ENCODE measurements at regions of chr7 and their contacts with region 1.

Region 1: DNA sequence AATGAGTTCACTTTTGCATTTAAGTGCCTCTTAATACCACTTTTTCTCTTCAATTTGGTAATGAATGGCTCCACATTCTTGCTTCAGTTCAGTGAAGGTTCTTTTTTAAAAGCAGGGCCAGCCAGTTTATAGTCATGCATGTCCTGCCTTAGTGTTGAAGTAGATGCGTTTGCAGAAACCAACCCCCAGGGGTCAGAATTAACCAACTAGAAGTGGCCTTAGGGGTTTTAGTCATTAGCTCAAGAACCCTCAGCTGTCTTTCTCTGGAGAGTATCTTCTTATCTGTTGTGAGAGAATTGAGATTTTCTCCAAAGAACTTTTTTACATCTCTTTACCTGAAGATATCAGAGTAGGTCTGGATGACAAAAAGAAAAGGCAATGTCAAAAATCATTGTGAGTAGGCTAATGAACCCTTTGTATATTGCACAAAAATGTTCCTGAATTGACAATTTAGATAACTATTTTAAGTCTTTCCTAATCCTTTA is 82.2 kb downstream of the PIK3CG start:
- DNase-seq: peak; percentile 88 to 96 (median 90)
- ATAC-seq: peak; percentile 95
- H3K4me3 ChIP-seq: no peak overlapping the region
- H3K27ac ChIP-seq: no peak overlapping the region
- H3K4me1 ChIP-seq: peaks cover 7 to 21% of the 10 kb centered on the region in 2 experiments
- H3K27me3 ChIP-seq: no peaks in the 10 kb centered on the region; a peak in 1 of 5 replicates
- CTCF ChIP-seq: peak; percentile 92 to 99 (median 94)
- EP300 ChIP-seq: peak; percentile 57; the same call in 1 of the 2 replicates
- POLR2A ChIP-seq: no peak
- RAD21 ChIP-seq: peak; percentile 100

Region 2: DNA sequence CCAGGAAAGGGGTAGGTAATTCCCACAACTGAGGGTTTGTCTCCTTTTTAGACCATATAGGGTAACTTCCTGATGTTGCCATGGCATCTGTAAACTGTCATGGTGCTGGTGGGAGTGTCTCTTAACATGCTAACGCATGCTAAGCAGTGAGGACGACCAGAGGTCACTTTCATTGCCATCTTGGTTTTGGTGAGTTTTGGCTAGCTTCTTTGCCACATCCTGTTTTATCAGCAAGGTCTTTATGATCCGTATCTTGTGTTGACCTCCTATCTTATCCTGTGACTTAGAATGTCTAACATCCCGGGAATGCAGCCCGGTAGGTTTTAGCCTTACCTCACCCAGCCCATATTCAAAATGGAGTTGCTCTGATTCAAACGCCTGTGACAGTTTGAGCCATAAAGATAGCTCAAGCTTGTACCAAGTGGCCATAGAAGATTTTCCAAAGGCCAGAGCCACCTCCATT is 486.5 kb before region 1 on chr7:
- CTCF ChIA-PET with region 1: no interaction called
- POLR2A ChIA-PET with region 1: no interaction called
- in situ Hi-C with region 1: no loop called
- intact Hi-C with region 1: no loop called
- DNase-seq: no peak
- ATAC-seq: no peak
- H3K4me3 ChIP-seq: no peak overlapping the region
- H3K27ac ChIP-seq: no peak overlapping the region
- H3K4me1 ChIP-seq: peaks cover 0 to 11% of the 10 kb centered on the region in 2 experiments; a peak in 2 of 5 replicates
- H3K27me3 ChIP-seq: no peaks in the 10 kb centered on the region
- CTCF ChIP-seq: no peak
- EP300 ChIP-seq: no peak
- POLR2A ChIP-seq: no peak
- RAD21 ChIP-seq: no peak

Region 3: GRCh38 chr7:106978425-106979420 is 31.4 kb after region 1 on chr7:
- CTCF ChIA-PET with region 1: no interaction called
- POLR2A ChIA-PET with region 1: interaction called, 4 read pairs
- in situ Hi-C with region 1: no loop called
- intact Hi-C with region 1: loop called (anchors 1 kb)
- DNase-seq: peak; percentile 87 to 98 (median 92)
- ATAC-seq: peak; percentile 87
- H3K4me3 ChIP-seq: no peak overlapping the region
- H3K27ac ChIP-seq: peak overlapping the region; percentile 89
- H3K4me1 ChIP-seq: peaks cover 23 to 60% of the 10 kb centered on the region in 2 experiments
- H3K27me3 ChIP-seq: no peaks in the 10 kb centered on the region
- CTCF ChIP-seq: peak; percentile 57 to 68 (median 59)
- EP300 ChIP-seq: peak; percentile 98
- POLR2A ChIP-seq: peak; percentile 55; the same call in 1 of the 2 replicates
- RAD21 ChIP-seq: peak; percentile 10 to 68; a peak in 3 of 4 replicates

Region 4: DNA sequence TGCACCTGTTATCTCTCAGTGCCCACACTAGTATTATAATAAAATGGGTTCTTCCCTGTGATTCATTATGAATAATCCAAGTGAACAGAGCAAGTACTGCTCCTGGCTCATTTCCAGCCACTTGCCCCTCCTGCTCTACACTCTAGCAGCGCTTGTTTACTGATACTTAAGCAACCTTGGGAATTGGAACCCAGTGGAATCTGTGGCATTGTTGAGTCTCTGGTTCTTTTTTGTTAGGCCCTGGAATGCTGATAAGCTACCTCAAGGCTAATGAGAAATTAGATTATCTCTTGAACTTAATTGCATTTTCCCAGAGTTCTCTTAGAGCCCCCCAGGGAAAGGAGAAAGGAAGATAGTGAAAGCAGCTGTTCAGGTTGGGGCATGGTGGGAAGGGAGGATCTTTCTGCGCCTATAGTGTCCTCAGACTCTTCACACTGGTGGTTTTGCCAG is 131.3 kb after region 1 on chr7:
- CTCF ChIA-PET with region 1: no interaction called
- POLR2A ChIA-PET with region 1: no interaction called
- in situ Hi-C with region 1: no loop called
- intact Hi-C with region 1: loop called (anchors 5 kb)
- DNase-seq: peak; percentile 49 to 74 (median 61)
- ATAC-seq: peak; percentile 33
- H3K4me3 ChIP-seq: no peak overlapping the region
- H3K27ac ChIP-seq: peak overlapping the region; percentile 65
- H3K4me1 ChIP-seq: peaks cover 27 to 64% of the 10 kb centered on the region in 2 experiments
- H3K27me3 ChIP-seq: no peaks in the 10 kb centered on the region
- CTCF ChIP-seq: no peak
- EP300 ChIP-seq: no peak
- POLR2A ChIP-seq: no peak
- RAD21 ChIP-seq: no peak

Region 5: GRCh38 chr7:107168233-107169119 is 221.2 kb after region 1 on chr7 and contains the start of gene HBP1:
- CTCF ChIA-PET with region 1: no interaction called
- POLR2A ChIA-PET with region 1: interaction called, 14 read pairs
- in situ Hi-C with region 1: no loop called
- intact Hi-C with region 1: loop called (anchors 1 kb)
- DNase-seq: peak; percentile 96 to 100 (median 98)
- ATAC-seq: peak; percentile 89
- H3K4me3 ChIP-seq: peak within 1 kb of the TSS; percentile 74
- H3K27ac ChIP-seq: peak within 1 kb of the TSS; percentile 93
- H3K4me1 ChIP-seq: peaks cover 5 to 21% of the 10 kb centered on the region in 2 experiments
- H3K27me3 ChIP-seq: no peaks in the 10 kb centered on the region
- CTCF ChIP-seq: 0 out of 6 replicates have a peak, but pooled peaks of 1 of the 3 experiments have one; percentile 10
- EP300 ChIP-seq: no peak; the same call in 1 of the 2 replicates
- POLR2A ChIP-seq: peak; percentile 72
- RAD21 ChIP-seq: no peak
- polyA plus RNA-seq, gene HBP1: 37.9 to 44.9 TPM

Region 6: DNA sequence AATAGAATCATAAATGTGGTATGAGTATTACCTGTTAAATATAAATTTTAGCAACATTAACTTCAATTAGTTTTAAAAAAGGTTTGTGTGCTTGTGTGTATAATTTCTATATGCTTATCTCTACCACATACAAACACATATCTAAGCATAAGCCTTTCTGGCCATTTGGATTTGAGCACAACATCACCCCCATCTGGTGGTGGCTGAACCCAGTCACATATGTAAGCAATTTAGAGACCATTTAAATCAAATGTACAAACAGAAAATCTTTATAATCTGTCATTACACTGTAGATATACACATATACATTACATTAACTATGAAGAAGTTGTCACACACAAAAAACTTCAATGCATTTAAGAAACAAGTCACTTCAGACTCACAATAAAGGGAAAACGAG is 554.3 kb after region 1 on chr7:
- CTCF ChIA-PET with region 1: no interaction called
- POLR2A ChIA-PET with region 1: no interaction called
- in situ Hi-C with region 1: no loop called
- intact Hi-C with region 1: loop called (anchors 1 kb)
- DNase-seq: peak; percentile 47 to 76 (median 62)
- ATAC-seq: peak; percentile 92
- H3K4me3 ChIP-seq: no peak overlapping the region
- H3K27ac ChIP-seq: no peak overlapping the region
- H3K4me1 ChIP-seq: peaks cover 2 to 3% of the 10 kb centered on the region in 2 experiments; a peak in 2 of 5 replicates
- H3K27me3 ChIP-seq: no peaks in the 10 kb centered on the region
- CTCF ChIP-seq: peak; percentile 63 to 96 (median 84); a peak in 5 of 6 replicates
- EP300 ChIP-seq: no peak
- POLR2A ChIP-seq: no peak
- RAD21 ChIP-seq: peak; percentile 89 to 92